ENCODE measurements at regions of chr11 and their contacts with region 1.

Region 1: DNA sequence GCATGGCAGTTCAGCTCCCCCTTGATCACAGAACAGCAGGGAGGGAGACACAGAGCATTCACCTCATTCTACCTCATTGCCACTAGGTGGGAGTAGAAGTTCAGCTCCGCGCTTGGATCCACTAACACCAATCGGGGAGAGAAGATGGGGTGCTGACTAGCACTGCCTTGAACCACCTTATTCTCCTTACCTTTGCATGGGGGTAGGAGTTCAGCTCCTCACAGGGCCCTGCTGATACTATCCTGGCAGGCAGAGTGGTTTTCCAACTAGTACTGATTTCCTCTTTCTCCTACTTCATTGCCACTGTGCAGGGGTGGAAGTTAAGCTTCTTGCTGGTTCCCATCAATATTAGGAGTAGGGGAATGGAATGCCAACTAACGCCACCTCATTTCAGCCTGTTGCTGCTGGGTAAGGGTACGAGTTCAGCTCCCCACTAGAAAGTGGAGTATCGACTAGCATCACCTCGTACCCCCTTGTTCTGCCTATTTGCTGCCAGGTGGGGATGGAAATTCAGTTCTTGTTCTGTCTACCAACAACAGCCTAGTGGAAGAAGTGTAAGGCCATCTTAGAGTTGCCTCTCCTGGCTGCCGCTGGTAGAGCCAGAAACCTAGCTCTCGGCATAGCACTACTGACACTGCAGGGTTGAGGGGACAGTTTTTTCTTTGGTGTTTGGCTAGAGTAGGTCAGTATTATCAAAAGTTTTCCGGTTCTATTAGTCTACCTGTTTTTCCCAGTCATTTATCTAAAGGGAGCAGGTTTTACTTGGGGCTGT is 550.9 kb upstream of the CCDC90B start:
- DNase-seq: peak; percentile 56
- ATAC-seq: peak; percentile 99
- H3K4me3 Mint-ChIP-seq: no peak overlapping the region
- H3K27ac Mint-ChIP-seq: no peak overlapping the region
- H3K4me1 Mint-ChIP-seq: peaks cover 4% of the 10 kb centered on the region; the same call in 1 of the 2 replicates
- H3K27me3 Mint-ChIP-seq: no peaks in the 10 kb centered on the region
- CTCF ChIP-seq: peak; percentile 69

Region 2: GRCh38 chr11:83809274-83809673 is 27.8 kb before region 1 on chr11:
- CTCF ChIA-PET with region 1: no interaction called
- POLR2A ChIA-PET with region 1: no interaction called
- DNase-seq: no peak
- ATAC-seq: no peak
- H3K4me3 Mint-ChIP-seq: no peak overlapping the region
- H3K27ac Mint-ChIP-seq: no peak overlapping the region
- H3K4me1 Mint-ChIP-seq: no peaks in the 10 kb centered on the region
- H3K27me3 Mint-ChIP-seq: no peaks in the 10 kb centered on the region
- CTCF ChIP-seq: no peak

Region 3: DNA sequence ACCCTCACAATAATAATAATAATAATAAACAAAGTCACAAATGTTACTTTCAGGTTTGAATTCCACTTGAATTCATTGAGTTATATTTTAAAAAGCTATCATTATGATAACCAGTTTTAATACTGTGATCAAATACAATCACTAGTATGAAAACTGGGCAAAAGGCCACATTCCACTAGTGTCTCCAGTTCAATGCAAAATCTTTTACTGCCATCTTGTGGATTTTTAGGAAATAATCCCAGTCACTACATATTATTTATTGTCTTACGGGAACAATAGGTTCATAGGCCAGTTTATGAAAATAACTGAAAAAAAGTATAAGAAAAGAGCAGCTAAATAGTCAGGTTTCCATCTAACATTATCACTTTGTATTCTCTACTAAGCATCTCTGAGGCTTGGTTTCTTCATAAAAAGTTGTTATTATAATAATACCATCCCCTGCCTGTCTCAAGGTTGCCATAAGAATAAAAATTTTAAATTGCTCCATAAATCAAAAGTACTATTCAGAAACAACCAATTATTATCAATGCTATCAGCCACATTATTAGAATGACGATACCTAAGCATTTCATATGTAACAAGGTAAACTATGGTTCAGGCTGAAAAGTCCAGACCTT is 17.0 kb before region 1 on chr11:
- CTCF ChIA-PET with region 1: interaction called, 13 read pairs
- POLR2A ChIA-PET with region 1: no interaction called
- DNase-seq: no peak
- ATAC-seq: no peak
- H3K4me3 Mint-ChIP-seq: no peak overlapping the region
- H3K27ac Mint-ChIP-seq: no peak overlapping the region
- H3K4me1 Mint-ChIP-seq: no peaks in the 10 kb centered on the region
- H3K27me3 Mint-ChIP-seq: no peaks in the 10 kb centered on the region
- CTCF ChIP-seq: peak; percentile 39; the same call in 1 of the 2 replicates

Region 4: DNA sequence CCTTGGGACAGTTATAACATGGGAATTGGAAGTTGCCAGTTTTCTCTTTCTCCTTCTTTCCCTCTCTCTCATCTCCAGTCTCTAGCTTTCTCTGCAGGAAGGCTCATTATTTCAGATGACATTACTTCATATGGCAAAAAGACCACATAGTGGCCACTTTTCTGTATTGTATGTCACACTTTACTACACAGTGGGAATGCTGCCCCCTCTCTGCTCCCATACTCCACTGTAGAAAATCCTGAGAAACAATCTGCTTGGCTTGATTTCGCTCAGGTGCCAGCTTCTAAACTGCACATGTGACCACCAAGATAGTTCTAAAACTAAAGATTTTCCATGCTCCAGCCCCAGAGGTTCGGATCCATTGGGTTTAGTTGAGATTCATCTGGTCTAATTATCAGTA is 309.8 kb after region 1 on chr11:
- CTCF ChIA-PET with region 1: interaction called, 13 read pairs
- POLR2A ChIA-PET with region 1: no interaction called
- DNase-seq: no peak
- ATAC-seq: peak; percentile 80
- H3K4me3 Mint-ChIP-seq: no peak overlapping the region
- H3K27ac Mint-ChIP-seq: no peak overlapping the region
- H3K4me1 Mint-ChIP-seq: peaks cover 9% of the 10 kb centered on the region
- H3K27me3 Mint-ChIP-seq: no peaks in the 10 kb centered on the region
- CTCF ChIP-seq: no peak

Region 5: GRCh38 chr11:84247782-84248325 is 410.8 kb after region 1 on chr11:
- CTCF ChIA-PET with region 1: interaction called, 14 read pairs
- POLR2A ChIA-PET with region 1: no interaction called
- DNase-seq: no peak
- ATAC-seq: no peak
- H3K4me3 Mint-ChIP-seq: no peak overlapping the region
- H3K27ac Mint-ChIP-seq: no peak overlapping the region
- H3K4me1 Mint-ChIP-seq: peaks cover 3% of the 10 kb centered on the region; the same call in 1 of the 2 replicates
- H3K27me3 Mint-ChIP-seq: no peaks in the 10 kb centered on the region
- CTCF ChIP-seq: no peak

Region 6: DNA sequence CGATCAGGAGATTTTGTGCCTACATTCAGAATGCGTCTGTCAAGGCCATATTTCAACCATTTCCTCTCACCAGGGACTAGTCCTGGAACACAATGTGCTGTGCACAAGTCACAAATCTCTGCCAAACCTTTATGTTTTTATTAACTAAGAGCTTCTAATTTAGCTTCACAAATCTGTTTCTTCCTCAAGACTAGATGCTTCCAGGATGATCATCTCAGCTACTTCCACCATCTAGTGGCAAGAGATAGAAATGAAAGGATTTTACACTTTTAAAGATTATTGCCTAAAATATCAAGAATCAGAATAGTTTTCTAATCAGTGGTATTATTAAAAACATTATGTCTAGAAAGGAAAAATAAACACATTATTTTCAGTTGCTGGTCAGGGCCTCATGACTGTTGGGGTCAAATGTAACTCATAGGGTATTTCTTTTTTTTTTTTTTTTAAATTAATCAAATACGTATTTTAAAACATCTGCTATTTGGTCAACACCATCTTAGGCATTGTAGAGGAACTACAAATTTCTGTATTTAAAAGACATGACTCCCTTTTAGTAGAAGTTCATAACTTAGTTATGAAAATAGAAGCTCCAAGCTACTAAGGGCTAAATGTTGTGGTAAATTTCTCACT is 687.5 kb after region 1 on chr11:
- CTCF ChIA-PET with region 1: interaction called, 10 read pairs
- POLR2A ChIA-PET with region 1: no interaction called
- DNase-seq: no peak
- ATAC-seq: no peak
- H3K4me3 Mint-ChIP-seq: no peak overlapping the region
- H3K27ac Mint-ChIP-seq: no peak overlapping the region
- H3K4me1 Mint-ChIP-seq: peaks cover 18% of the 10 kb centered on the region
- H3K27me3 Mint-ChIP-seq: no peaks in the 10 kb centered on the region
- CTCF ChIP-seq: peak; percentile 49; the same call in 1 of the 2 replicates

Measured in WTC11 (cell line).